CD14-positive monocyte (primary cell): ENCODE measurements at regions of chr3 and their contacts with region 1.

Region 1: DNA sequence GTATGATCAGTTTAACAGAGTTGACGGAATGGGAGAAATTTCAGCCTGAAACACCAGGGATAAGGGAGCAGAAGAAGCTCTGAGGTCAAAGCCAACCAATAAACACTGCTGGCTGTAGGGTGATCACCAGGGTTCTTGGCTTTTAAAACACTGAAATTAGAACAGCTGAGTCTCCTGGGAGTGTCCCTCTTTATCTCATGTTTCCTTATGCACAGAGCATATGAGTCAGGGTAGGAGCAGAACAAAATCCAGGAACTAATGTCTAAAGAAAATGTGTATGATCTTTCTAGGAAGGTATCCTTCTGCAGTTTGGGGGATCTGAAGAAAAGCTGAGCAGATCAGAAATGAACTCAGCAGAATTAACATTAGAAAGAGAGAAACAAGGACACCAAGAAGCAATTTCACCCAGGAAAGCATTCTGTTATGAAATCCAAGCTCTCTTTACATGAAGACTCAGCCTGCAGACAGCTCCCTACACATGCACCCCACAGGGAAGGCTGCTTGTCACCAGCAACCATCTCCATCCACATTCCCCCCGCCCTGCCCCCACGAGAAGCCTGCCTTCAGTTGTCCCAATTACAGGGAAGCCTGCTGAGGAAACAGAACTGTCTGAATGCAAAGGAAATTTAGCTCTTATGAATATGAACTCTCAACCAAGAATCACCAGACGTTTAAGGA is 469.7 kb downstream of the PDCD6IP start:
- DNase-seq: peak in 1 of 3 donors; percentile 15
- H3K4me3 ChIP-seq: no peak overlapping the region
- H3K4me3 Mint-ChIP-seq: peak overlapping the region in 1 of 2 donors; percentile 13
- H3K27ac ChIP-seq: no peak overlapping the region
- H3K27ac Mint-ChIP-seq: peak overlapping the region in 1 of 7 donors; percentile 55
- H3K4me1 ChIP-seq: peaks cover 37 to 39% of the 10 kb centered on the region in 2 donors
- H3K4me1 Mint-ChIP-seq: peaks cover 44% of the 10 kb centered on the region
- H3K27me3 ChIP-seq: no peaks in the 10 kb centered on the region
- H3K27me3 Mint-ChIP-seq: no peaks in the 10 kb centered on the region
- CTCF ChIP-seq: no peak

Region 2: GRCh38 chr3:34185301-34185700 is 82.9 kb before region 1 on chr3:
- intact Hi-C with region 1: no loop called
- DNase-seq: no peak
- H3K4me3 ChIP-seq: no peak overlapping the region
- H3K4me3 Mint-ChIP-seq: no peak overlapping the region
- H3K27ac ChIP-seq: no peak overlapping the region
- H3K27ac Mint-ChIP-seq: no peak overlapping the region
- H3K4me1 ChIP-seq: no peaks in the 10 kb centered on the region
- H3K4me1 Mint-ChIP-seq: no peaks in the 10 kb centered on the region
- H3K27me3 ChIP-seq: no peaks in the 10 kb centered on the region
- H3K27me3 Mint-ChIP-seq: peaks cover 1 to 2% (median 2%) of the 10 kb centered on the region in 3 donors
- CTCF ChIP-seq: no peak

Region 3: GRCh38 chr3:34361921-34362320 is 93.8 kb after region 1 on chr3:
- intact Hi-C with region 1: loop called in 1 of 2 experiments (anchors 5 kb)
- DNase-seq: peak; percentile 83 to 94 (median 88)
- H3K4me3 ChIP-seq: peak overlapping the region in 1 of 3 experiments; percentile 0
- H3K4me3 Mint-ChIP-seq: peak overlapping the region in 1 of 2 donors; percentile 42
- H3K27ac ChIP-seq: peak overlapping the region; percentile 3 to 72
- H3K27ac Mint-ChIP-seq: peak overlapping the region; percentile 74 to 90 (median 82)
- H3K4me1 ChIP-seq: peaks cover 30 to 36% of the 10 kb centered on the region in 2 donors
- H3K4me1 Mint-ChIP-seq: peaks cover 44% of the 10 kb centered on the region
- H3K27me3 ChIP-seq: no peaks in the 10 kb centered on the region
- H3K27me3 Mint-ChIP-seq: peaks cover 0 to 5% (median 0%) of the 10 kb centered on the region in 3 donors
- CTCF ChIP-seq: no peak

Region 4: DNA sequence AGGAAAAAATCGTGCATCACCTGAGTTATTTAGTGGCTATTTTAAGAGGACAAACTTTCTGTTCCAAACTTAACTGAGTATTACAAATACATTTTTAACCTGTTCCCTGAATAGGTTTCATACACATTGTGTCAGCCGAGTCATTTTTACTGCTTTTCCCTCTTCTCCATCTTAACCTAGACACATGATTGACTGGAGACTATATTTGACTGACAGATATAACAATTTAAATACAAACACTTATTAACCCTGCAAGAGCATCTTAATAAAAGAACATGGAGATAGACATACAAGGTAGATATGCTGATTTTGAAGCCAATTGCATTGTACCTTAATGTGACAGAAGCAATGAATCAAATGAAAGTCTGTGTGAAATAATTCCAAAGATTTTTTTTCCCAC is 560.7 kb after region 1 on chr3:
- intact Hi-C with region 1: no loop called
- DNase-seq: no peak
- H3K4me3 ChIP-seq: no peak overlapping the region
- H3K4me3 Mint-ChIP-seq: no peak overlapping the region
- H3K27ac ChIP-seq: no peak overlapping the region
- H3K27ac Mint-ChIP-seq: no peak overlapping the region
- H3K4me1 ChIP-seq: no peaks in the 10 kb centered on the region
- H3K4me1 Mint-ChIP-seq: no peaks in the 10 kb centered on the region
- H3K27me3 ChIP-seq: no peaks in the 10 kb centered on the region
- H3K27me3 Mint-ChIP-seq: peaks cover 0 to 3% (median 0%) of the 10 kb centered on the region in 3 donors
- CTCF ChIP-seq: no peak